Stomach (tissue), 19 donors: ENCODE measurements at regions of chr12 and their contacts with region 1.

Region 1: GRCh38 chr12:31672521-31672920 is 13.0 kb downstream of the ETFBKMT start:
- DNase-seq: no peak
- H3K4me3 ChIP-seq: no peak overlapping the region
- H3K27ac ChIP-seq: no peak overlapping the region
- H3K4me1 ChIP-seq: no peaks in the 10 kb centered on the region
- H3K27me3 ChIP-seq: no peaks in the 10 kb centered on the region
- CTCF ChIP-seq: no peak
- EP300 ChIP-seq: no peak
- POLR2A ChIP-seq: no peak

Region 2: GRCh38 chr12:32051559-32052414 is 379.3 kb after region 1 on chr12:
- intact Hi-C with region 1: loop called (anchors 10 kb)
- DNase-seq: peak in 1 of 2 donors; percentile 41
- H3K4me3 ChIP-seq: no peak overlapping the region
- H3K27ac ChIP-seq: no peak overlapping the region
- H3K4me1 ChIP-seq: peaks cover 0 to 10% (median 0%) of the 10 kb centered on the region in 4 donors
- H3K27me3 ChIP-seq: no peaks in the 10 kb centered on the region
- CTCF ChIP-seq: no peak
- EP300 ChIP-seq: no peak
- POLR2A ChIP-seq: no peak